GM12878 (cell line): ENCODE measurements at regions of chr5 and their contacts with region 1.

Region 1: GRCh38 chr5:143182901-143183820 is 220.3 kb downstream of the NR3C1 start:
- DNase-seq: peak; percentile 84
- ATAC-seq: peak; percentile 82
- H3K4me3 ChIP-seq: peak overlapping the region; percentile 32; the same call in 1 of the 2 replicates
- H3K27ac ChIP-seq: peak overlapping the region; percentile 90
- H3K4me1 ChIP-seq: peaks cover 53% of the 10 kb centered on the region
- H3K27me3 ChIP-seq: no peaks in the 10 kb centered on the region
- CTCF ChIP-seq: peak in 2 of 3 experiments; percentile 4 to 12; a peak in 1 of 6 replicates
- EP300 ChIP-seq: peak; percentile 78 to 79
- POLR2A ChIP-seq: peak; percentile 46
- RAD21 ChIP-seq: 0 out of 2 replicates have a peak, but pooled peaks have one; percentile 32

Region 2: DNA sequence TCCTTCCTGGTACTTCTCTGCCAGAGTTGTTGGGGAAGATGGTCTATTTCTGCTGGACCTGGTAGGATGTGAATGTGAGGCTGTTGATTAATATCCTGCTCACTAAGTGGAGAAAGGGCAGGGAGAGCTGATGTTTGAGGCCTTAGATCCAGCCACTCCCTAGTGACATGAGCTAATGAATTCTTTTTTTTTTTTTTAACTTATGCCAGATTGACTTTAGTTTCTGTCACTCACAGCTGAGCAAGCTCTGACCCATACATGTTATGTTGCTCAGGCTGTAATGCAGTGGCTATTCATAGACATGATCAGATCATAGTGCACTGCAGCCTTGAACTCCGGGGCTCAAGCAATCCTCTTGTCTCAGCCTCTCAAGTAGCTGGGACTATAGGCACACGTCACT is 783.3 kb before region 1 on chr5:
- CTCF ChIA-PET with region 1: no interaction called
- POLR2A ChIA-PET with region 1: no interaction called
- RAD21 ChIA-PET with region 1: no interaction called
- SMC1A ChIA-PET with region 1: no interaction called
- in situ Hi-C with region 1: no loop called
- intact Hi-C with region 1: no loop called
- DNase-seq: no peak
- ATAC-seq: peak; percentile 49
- H3K4me3 ChIP-seq: no peak overlapping the region
- H3K27ac ChIP-seq: no peak overlapping the region
- H3K4me1 ChIP-seq: no peaks in the 10 kb centered on the region
- H3K27me3 ChIP-seq: no peaks in the 10 kb centered on the region
- CTCF ChIP-seq: no peak
- EP300 ChIP-seq: no peak
- POLR2A ChIP-seq: no peak
- RAD21 ChIP-seq: no peak

Region 3: DNA sequence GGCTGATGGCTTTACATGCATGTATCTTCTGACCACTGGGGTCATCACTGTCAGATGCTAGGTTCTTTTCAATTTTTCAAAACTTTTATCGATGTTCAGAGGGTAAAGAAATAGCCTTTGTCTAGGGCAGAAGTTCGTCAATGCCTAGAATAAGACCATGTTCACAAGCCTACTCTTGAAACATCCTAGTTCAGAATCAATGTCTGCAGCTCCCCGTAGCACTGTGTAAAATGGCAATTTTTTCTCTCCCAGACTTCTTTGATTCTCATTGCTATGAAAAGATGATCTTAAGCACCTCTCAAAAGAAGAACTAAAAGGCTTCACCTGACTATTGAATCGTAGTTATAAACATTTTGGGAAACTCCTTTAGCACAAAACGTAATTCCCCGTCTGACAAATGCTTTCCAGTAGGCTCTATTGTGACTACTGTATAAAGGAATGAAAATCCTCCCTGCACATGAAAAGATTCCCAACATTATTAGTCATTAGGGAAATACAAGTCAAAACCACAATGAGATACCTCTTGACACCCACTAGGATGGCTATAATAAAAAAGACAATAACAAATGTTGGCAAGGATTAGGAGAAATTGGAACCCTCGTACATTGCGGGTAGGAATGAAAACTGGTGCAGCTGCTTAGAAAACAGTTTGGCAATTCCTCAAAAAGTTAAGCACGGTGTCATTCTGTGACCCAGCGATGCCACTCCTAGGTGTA is 149.5 kb before region 1 on chr5:
- CTCF ChIA-PET with region 1: interaction called, 3 read pairs
- POLR2A ChIA-PET with region 1: interaction called, 3 read pairs
- RAD21 ChIA-PET with region 1: interaction called, 7 read pairs
- SMC1A ChIA-PET with region 1: interaction called, 17 read pairs
- in situ Hi-C with region 1: no loop called
- intact Hi-C with region 1: no loop called
- DNase-seq: no peak
- ATAC-seq: no peak
- H3K4me3 ChIP-seq: no peak overlapping the region
- H3K27ac ChIP-seq: no peak overlapping the region
- H3K4me1 ChIP-seq: peaks cover 23% of the 10 kb centered on the region
- H3K27me3 ChIP-seq: no peaks in the 10 kb centered on the region
- CTCF ChIP-seq: no peak
- EP300 ChIP-seq: no peak
- POLR2A ChIP-seq: no peak
- RAD21 ChIP-seq: no peak

Region 4: DNA sequence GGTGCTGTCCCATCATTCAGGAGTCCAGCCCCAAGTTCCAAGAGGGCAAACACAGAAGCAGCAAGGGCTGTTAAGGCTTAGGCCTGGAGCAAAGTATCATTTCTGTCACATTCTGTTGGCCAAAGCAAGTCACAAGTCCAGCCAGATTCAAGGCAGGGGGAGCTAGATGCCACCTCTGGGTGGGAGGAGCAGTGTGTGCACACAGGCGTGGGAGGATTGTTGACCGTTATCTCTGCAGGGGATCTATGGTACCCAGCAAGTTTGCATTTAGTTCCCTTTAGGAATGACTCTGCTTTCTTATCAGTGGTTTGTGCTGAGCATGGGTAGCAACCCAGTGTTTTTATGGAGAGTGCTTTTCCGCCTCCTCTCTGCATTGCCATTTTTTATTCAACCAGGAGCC is 58.6 kb before region 1 on chr5:
- CTCF ChIA-PET with region 1: interaction called, 8 read pairs
- POLR2A ChIA-PET with region 1: interaction called, 7 read pairs
- RAD21 ChIA-PET with region 1: interaction called, 15 read pairs
- SMC1A ChIA-PET with region 1: interaction called, 37 read pairs
- in situ Hi-C with region 1: no loop called
- intact Hi-C with region 1: no loop called
- DNase-seq: peak; percentile 77
- ATAC-seq: peak; percentile 68
- H3K4me3 ChIP-seq: no peak overlapping the region
- H3K27ac ChIP-seq: no peak overlapping the region; the same call in 1 of the 2 replicates
- H3K4me1 ChIP-seq: peaks cover 8% of the 10 kb centered on the region
- H3K27me3 ChIP-seq: no peaks in the 10 kb centered on the region
- CTCF ChIP-seq: no peak
- EP300 ChIP-seq: no peak
- POLR2A ChIP-seq: no peak
- RAD21 ChIP-seq: no peak

Region 5: DNA sequence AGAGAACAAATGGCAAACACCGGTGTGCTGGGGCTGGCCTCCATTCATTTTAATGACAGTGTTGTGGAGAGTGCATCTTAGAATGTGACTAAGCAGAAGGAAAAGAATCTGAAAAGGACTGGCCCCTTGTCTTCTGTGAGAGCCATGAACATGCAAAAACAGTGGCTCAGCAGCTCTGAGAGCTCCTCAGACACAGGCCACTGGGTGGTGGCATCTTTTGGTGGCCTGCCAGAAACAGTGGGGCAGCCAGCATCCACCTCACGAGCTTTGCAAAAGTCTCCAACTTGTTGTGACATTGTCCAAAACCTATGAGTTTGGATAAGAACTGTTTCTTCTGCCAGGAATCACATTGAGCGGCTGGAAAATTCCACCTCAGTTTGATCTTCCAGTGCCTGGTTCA is 13.1 kb before region 1 on chr5:
- CTCF ChIA-PET with region 1: interaction called, 12 read pairs
- POLR2A ChIA-PET with region 1: interaction called, 10 read pairs
- RAD21 ChIA-PET with region 1: interaction called, 44 read pairs
- SMC1A ChIA-PET with region 1: interaction called, 50 read pairs
- in situ Hi-C with region 1: no loop called
- intact Hi-C with region 1: no loop called
- DNase-seq: no peak
- ATAC-seq: no peak
- H3K4me3 ChIP-seq: no peak overlapping the region
- H3K27ac ChIP-seq: no peak overlapping the region
- H3K4me1 ChIP-seq: no peaks in the 10 kb centered on the region; the same call in 1 of the 2 replicates
- H3K27me3 ChIP-seq: no peaks in the 10 kb centered on the region
- CTCF ChIP-seq: no peak
- EP300 ChIP-seq: no peak
- POLR2A ChIP-seq: no peak
- RAD21 ChIP-seq: no peak

Region 6: DNA sequence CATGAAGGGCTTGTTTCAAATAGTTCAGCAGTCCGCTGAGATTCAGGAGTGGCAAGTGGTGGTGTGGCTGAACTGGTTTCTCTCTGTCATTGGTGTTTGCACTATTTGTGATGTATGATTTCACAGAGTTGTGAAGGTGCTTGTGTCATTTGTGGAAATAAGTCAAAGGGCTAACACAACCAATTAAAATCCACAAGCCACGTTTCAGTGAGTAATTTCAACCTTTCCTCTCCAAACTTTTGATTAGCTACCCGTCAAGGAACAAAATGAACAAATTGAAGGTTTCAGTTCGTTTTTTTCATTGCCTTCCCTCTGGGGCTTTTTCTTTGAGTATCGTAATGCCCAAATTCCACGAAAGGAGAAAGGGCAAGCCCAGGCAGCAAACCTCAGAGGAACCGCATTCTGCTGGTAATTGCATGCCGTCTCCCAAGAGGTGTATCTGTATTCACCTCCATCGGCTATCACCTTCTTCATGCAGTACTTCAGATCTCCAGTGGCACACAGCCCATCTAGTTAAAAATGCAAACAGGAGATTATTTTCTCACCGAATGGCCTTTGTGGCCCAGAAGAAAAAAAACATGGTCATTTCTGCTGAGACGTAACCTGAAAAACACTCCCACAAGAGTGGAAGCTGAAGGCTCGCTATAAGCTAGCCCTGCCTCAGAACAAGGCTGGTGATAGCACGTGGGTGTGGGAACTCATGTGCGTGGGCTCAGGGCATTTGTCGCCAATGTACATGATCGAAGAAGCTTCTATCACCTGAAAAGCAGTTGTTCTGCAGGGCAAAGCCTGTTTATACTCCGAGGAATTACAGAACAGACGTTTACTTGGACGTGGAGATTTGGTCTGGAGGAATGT is 23.3 kb after region 1 on chr5:
- CTCF ChIA-PET with region 1: interaction called, 82 read pairs
- POLR2A ChIA-PET with region 1: interaction called, 60 read pairs
- RAD21 ChIA-PET with region 1: interaction called, 227 read pairs
- SMC1A ChIA-PET with region 1: interaction called, 193 read pairs
- in situ Hi-C with region 1: no loop called
- intact Hi-C with region 1: loop called (anchors 1 kb)
- DNase-seq: peak; percentile 98
- ATAC-seq: peak; percentile 71
- H3K4me3 ChIP-seq: peak overlapping the region; percentile 21; the same call in 1 of the 2 replicates
- H3K27ac ChIP-seq: peak overlapping the region; percentile 94
- H3K4me1 ChIP-seq: peaks cover 52% of the 10 kb centered on the region
- H3K27me3 ChIP-seq: no peaks in the 10 kb centered on the region
- CTCF ChIP-seq: peak in 1 of 3 experiments; percentile 13; a peak in 1 of 6 replicates
- EP300 ChIP-seq: peak; percentile 76 to 91; a peak in 2 of 4 replicates
- POLR2A ChIP-seq: peak; percentile 61; the same call in 1 of the 2 replicates
- RAD21 ChIP-seq: peak; percentile 40